ENCODE measurements at regions of chr2 and their contacts with region 1.

Region 1: DNA sequence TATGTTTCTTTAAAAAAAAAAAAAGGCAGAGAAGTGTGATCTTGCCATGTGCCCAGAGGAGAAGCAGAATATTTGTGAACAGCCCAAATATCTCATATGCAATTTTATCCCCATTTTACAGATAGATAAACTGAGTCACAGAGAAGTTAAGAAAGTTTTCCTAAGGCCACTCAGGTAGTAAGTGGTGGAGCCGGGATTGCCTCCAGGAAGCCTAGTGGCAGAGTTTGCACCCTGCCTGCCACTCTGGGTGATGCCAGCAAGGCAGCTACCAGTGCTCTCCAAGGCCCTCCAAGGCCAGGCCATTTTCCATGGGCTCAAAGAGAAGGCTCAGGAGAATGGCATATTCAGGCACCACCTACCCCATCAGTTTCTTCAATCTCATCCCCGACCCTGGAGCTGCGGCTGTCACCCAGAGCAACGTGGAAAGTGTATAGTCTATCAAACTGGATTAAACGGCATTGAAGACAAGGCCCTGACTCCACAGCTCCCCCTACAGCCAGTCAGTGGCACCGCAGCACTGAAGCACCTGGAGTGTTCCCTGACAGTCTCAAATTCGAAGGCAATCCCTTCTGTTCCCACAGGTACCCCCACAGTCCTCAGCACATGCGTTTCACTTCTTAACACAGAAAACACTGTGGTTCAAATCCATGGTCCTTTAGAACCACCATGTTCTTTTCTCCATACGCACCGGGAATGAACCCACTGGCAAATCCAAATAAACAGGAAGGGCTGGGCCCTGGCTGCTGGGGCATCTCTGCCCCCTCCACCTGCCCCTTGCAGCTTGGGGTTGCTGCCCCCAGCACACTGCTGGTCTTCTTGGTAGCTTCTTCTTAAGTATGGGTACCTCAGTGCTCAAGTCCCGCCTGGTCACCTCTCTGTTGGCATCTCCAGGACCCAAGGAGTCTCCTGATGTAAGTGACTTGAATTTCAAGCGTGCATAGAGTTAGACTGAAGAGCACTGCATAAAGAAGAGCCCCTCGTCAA is 175.3 kb downstream of the INHBB start:
- DNase-seq: peak; percentile 65
- H3K4me3 ChIP-seq: no peak overlapping the region; a peak in 1 of 4 replicates
- H3K27ac ChIP-seq: no peak overlapping the region
- H3K4me1 ChIP-seq: no peaks in the 10 kb centered on the region; a peak in 1 of 4 replicates
- H3K27me3 ChIP-seq: peaks cover 40% of the 10 kb centered on the region
- CTCF ChIP-seq: peak; percentile 73
- EP300 ChIP-seq: no peak
- RAD21 ChIP-seq: peak; percentile 58

Region 2: GRCh38 chr2:120508567-120509041 is 12.6 kb before region 1 on chr2:
- CTCF ChIA-PET with region 1: interaction called, 18 read pairs
- POLR2A ChIA-PET with region 1: no interaction called
- DNase-seq: no peak
- H3K4me3 ChIP-seq: no peak overlapping the region
- H3K27ac ChIP-seq: no peak overlapping the region
- H3K4me1 ChIP-seq: no peaks in the 10 kb centered on the region; a peak in 1 of 4 replicates
- H3K27me3 ChIP-seq: peaks cover 6% of the 10 kb centered on the region; the same call in 1 of the 2 replicates
- CTCF ChIP-seq: no peak
- EP300 ChIP-seq: no peak
- RAD21 ChIP-seq: no peak

Region 3: GRCh38 chr2:120566331-120567035 is 45.3 kb after region 1 on chr2:
- CTCF ChIA-PET with region 1: no interaction called
- POLR2A ChIA-PET with region 1: no interaction called
- DNase-seq: no peak
- H3K4me3 ChIP-seq: no peak overlapping the region
- H3K27ac ChIP-seq: no peak overlapping the region
- H3K4me1 ChIP-seq: no peaks in the 10 kb centered on the region
- H3K27me3 ChIP-seq: no peaks in the 10 kb centered on the region
- CTCF ChIP-seq: no peak
- EP300 ChIP-seq: no peak
- RAD21 ChIP-seq: no peak